ENCODE measurements at regions of chr3 and their contacts with region 1.

Region 1: GRCh38 chr3:25648107-25648535 is 16.6 kb downstream of the TOP2B start:
- DNase-seq: peak; percentile 85
- ATAC-seq: peak; percentile 86
- H3K4me3 ChIP-seq: no peak overlapping the region
- H3K4me3 Mint-ChIP-seq: no peak overlapping the region
- H3K27ac ChIP-seq: no peak overlapping the region
- H3K27ac Mint-ChIP-seq: no peak overlapping the region
- H3K4me1 ChIP-seq: peaks cover 3 to 11% of the 10 kb centered on the region in 2 donors
- H3K4me1 Mint-ChIP-seq: peaks cover 30% of the 10 kb centered on the region
- H3K27me3 ChIP-seq: no peaks in the 10 kb centered on the region
- H3K27me3 Mint-ChIP-seq: no peaks in the 10 kb centered on the region
- CTCF ChIP-seq: peak; percentile 87

Region 2: DNA sequence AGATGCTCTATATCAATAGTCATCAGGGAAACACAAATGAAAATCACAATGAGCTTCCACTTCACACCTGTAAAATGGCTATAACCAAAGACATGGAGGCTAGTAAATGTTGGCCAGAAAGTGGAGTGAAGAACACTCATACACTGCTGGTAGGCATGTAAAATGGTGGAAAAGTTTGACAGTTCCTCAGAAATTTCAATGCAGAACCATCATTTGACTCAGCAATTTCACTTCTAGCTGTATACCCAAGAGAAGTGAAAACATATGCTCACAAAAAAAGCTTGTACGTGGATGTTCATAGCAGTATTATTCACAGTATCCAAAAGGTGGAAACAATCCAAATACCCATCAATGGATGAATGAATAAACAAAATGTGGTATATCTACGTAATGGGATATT is 35.8 kb after region 1 on chr3:
- CTCF ChIA-PET with region 1: interaction called, 12 read pairs
- POLR2A ChIA-PET with region 1: no interaction called
- intact Hi-C with region 1: no loop called
- DNase-seq: no peak
- ATAC-seq: no peak
- H3K4me3 ChIP-seq: no peak overlapping the region
- H3K4me3 Mint-ChIP-seq: no peak overlapping the region
- H3K27ac ChIP-seq: no peak overlapping the region
- H3K27ac Mint-ChIP-seq: no peak overlapping the region
- H3K4me1 ChIP-seq: no peaks in the 10 kb centered on the region
- H3K4me1 Mint-ChIP-seq: no peaks in the 10 kb centered on the region
- H3K27me3 ChIP-seq: no peaks in the 10 kb centered on the region
- H3K27me3 Mint-ChIP-seq: no peaks in the 10 kb centered on the region
- CTCF ChIP-seq: no peak

Region 3: GRCh38 chr3:25801786-25802185 is 153.7 kb after region 1 on chr3:
- CTCF ChIA-PET with region 1: no interaction called
- POLR2A ChIA-PET with region 1: no interaction called
- intact Hi-C with region 1: no loop called
- DNase-seq: no peak
- ATAC-seq: no peak
- H3K4me3 ChIP-seq: no peak overlapping the region
- H3K4me3 Mint-ChIP-seq: no peak overlapping the region
- H3K27ac ChIP-seq: no peak overlapping the region
- H3K27ac Mint-ChIP-seq: no peak overlapping the region
- H3K4me1 ChIP-seq: no peaks in the 10 kb centered on the region
- H3K4me1 Mint-ChIP-seq: no peaks in the 10 kb centered on the region
- H3K27me3 ChIP-seq: peaks cover 0 to 5% (median 0%) of the 10 kb centered on the region in 4 experiments
- H3K27me3 Mint-ChIP-seq: peaks cover 7% of the 10 kb centered on the region
- CTCF ChIP-seq: no peak

Region 4: DNA sequence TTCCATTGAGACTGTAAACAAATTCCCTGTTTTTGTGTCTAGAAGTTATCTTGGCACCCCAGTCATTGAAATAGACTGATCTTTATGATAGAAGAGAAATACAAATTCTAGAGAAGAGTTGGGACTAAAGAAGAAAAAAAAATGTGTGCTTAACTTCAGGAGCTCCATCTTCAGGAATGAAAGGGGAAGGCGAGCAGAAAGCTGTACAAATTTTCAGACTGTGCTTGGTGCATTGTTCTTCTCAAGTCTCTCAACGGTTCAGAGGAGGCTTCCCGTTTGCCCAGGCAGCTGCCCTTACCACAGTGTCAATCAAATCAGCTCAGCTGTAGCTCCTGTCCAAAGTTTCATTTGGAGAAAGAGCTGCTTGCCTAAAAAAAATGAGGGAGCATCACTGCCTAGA is 183.5 kb after region 1 on chr3:
- CTCF ChIA-PET with region 1: interaction called, 14 read pairs
- POLR2A ChIA-PET with region 1: no interaction called
- intact Hi-C with region 1: no loop called
- DNase-seq: peak; percentile 12
- ATAC-seq: no peak
- H3K4me3 ChIP-seq: no peak overlapping the region
- H3K4me3 Mint-ChIP-seq: no peak overlapping the region
- H3K27ac ChIP-seq: no peak overlapping the region
- H3K27ac Mint-ChIP-seq: no peak overlapping the region
- H3K4me1 ChIP-seq: no peaks in the 10 kb centered on the region
- H3K4me1 Mint-ChIP-seq: peaks cover 6% of the 10 kb centered on the region
- H3K27me3 ChIP-seq: no peaks in the 10 kb centered on the region
- H3K27me3 Mint-ChIP-seq: peaks cover 7% of the 10 kb centered on the region
- CTCF ChIP-seq: no peak

Region 5: DNA sequence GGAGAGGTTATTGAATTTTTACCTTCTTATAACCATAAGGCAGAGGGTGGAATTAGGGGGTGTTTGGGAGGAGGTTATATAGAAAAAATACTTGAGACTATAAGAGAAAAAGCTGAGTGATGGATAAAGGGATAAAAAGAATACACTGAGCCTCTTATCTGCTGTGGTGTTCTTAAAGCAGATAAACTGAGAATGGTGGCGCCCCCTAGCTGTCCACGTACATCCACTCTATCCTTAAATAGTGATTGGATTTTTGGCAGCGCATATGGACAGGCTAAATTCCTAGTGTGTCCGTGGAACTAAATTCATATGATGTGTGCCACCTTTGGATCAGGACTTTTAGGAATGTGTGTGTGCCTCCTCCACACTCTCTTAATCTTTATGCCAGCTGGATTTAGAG is 262.9 kb after region 1 on chr3:
- CTCF ChIA-PET with region 1: interaction called, 16 read pairs
- POLR2A ChIA-PET with region 1: no interaction called
- intact Hi-C with region 1: loop called (anchors 1 kb)
- DNase-seq: peak; percentile 44
- ATAC-seq: no peak
- H3K4me3 ChIP-seq: no peak overlapping the region
- H3K4me3 Mint-ChIP-seq: no peak overlapping the region
- H3K27ac ChIP-seq: no peak overlapping the region
- H3K27ac Mint-ChIP-seq: no peak overlapping the region
- H3K4me1 ChIP-seq: no peaks in the 10 kb centered on the region
- H3K4me1 Mint-ChIP-seq: no peaks in the 10 kb centered on the region
- H3K27me3 ChIP-seq: no peaks in the 10 kb centered on the region
- H3K27me3 Mint-ChIP-seq: peaks cover 9% of the 10 kb centered on the region
- CTCF ChIP-seq: peak; percentile 68

Region 6: GRCh38 chr3:26712211-26713026 is 1064.3 kb after region 1 on chr3:
- CTCF ChIA-PET with region 1: interaction called, 9 read pairs
- POLR2A ChIA-PET with region 1: no interaction called
- intact Hi-C with region 1: loop called (anchors 5 kb)
- DNase-seq: peak; percentile 13
- ATAC-seq: no peak
- H3K4me3 ChIP-seq: no peak overlapping the region
- H3K4me3 Mint-ChIP-seq: no peak overlapping the region
- H3K27ac ChIP-seq: no peak overlapping the region
- H3K27ac Mint-ChIP-seq: no peak overlapping the region
- H3K4me1 ChIP-seq: no peaks in the 10 kb centered on the region
- H3K4me1 Mint-ChIP-seq: no peaks in the 10 kb centered on the region
- H3K27me3 ChIP-seq: no peaks in the 10 kb centered on the region
- H3K27me3 Mint-ChIP-seq: no peaks in the 10 kb centered on the region
- CTCF ChIP-seq: peak; percentile 64